ENCODE measurements at regions of chr1 and their contacts with region 1.

Region 1: GRCh38 chr1:163315773-163316374 is 5.9 kb upstream of the NUF2 start:
- DNase-seq: peak in 6 of 7 donors; percentile 22 to 68 (median 51)
- H3K4me3 ChIP-seq: no peak overlapping the region
- H3K27ac ChIP-seq: no peak overlapping the region
- H3K4me1 ChIP-seq: peaks cover 3% of the 10 kb centered on the region in 2 donors
- H3K27me3 ChIP-seq: no peaks in the 10 kb centered on the region
- CTCF ChIP-seq: peak; percentile 63 to 89 (median 76)
- POLR2A ChIP-seq: no peak

Region 2: DNA sequence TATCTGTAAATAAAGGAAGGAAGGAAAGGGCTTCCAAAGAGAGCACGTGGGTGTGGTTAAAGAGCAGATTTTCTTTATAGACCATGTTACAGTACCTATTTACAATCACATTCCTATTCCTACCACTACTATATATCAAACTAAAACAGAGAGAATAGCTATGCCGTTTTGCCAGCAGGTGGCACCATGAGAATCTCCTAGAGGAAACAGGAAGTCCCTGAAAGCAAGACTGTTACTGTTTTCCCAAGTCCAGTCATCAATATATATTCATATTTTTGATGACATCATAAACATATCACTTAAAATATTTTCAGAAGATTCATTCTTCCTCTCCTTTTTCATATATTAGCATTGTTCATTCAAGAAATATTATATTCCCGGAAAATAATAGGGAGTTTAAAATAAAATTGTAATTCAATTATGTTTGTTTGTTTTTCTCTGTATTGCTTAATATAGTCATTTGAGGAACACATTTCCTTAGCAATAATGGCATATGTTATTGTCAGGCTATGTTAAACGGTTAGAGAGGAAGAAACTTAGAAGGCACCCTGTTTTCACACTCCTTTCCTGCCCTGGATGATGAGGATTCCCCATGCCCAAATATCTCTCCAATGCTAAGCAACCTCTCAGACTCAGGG is 461.5 kb before region 1 on chr1:
- intact Hi-C with region 1: loop called in 1 of 2 experiments (anchors 10 kb)
- DNase-seq: peak; percentile 47 to 89 (median 63)
- H3K4me3 ChIP-seq: no peak overlapping the region
- H3K27ac ChIP-seq: no peak overlapping the region
- H3K4me1 ChIP-seq: no peaks in the 10 kb centered on the region
- H3K27me3 ChIP-seq: no peaks in the 10 kb centered on the region
- CTCF ChIP-seq: peak; percentile 53 to 75 (median 66)
- POLR2A ChIP-seq: no peak

Region 3: DNA sequence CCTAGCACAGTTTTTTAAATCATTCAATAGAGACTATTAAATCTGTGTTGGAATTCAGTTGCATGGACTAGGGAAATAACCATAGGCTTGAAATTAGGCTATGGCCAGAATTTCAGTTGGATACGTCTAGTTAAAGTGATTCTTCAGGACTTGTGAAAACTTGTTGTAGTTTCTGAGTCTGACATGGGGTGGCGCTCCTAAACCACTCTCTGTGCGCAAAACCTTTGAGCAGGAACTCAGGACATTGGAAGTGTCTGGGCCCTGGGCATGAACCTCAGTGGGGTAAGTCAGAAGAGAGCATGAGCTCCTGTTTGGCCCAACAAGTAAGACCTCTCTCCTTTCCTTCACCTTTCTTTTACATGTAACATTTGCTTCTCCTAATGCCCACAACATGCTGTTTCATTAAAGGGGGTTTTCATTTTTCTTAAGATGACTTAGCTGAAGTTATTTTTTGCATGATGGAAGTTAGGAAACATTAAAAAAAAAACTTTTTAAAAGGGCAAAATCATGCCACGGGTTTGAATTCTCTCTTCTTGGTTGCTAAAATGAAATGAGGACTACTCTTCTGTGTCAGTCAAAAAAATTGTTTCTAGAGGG is 437.8 kb before region 1 on chr1:
- intact Hi-C with region 1: loop called (anchors 5 kb)
- DNase-seq: peak; percentile 46 to 94 (median 75)
- H3K4me3 ChIP-seq: no peak overlapping the region
- H3K27ac ChIP-seq: no peak overlapping the region
- H3K4me1 ChIP-seq: no peaks in the 10 kb centered on the region
- H3K27me3 ChIP-seq: no peaks in the 10 kb centered on the region
- CTCF ChIP-seq: peak; percentile 35 to 91 (median 84)
- POLR2A ChIP-seq: no peak

Region 4: DNA sequence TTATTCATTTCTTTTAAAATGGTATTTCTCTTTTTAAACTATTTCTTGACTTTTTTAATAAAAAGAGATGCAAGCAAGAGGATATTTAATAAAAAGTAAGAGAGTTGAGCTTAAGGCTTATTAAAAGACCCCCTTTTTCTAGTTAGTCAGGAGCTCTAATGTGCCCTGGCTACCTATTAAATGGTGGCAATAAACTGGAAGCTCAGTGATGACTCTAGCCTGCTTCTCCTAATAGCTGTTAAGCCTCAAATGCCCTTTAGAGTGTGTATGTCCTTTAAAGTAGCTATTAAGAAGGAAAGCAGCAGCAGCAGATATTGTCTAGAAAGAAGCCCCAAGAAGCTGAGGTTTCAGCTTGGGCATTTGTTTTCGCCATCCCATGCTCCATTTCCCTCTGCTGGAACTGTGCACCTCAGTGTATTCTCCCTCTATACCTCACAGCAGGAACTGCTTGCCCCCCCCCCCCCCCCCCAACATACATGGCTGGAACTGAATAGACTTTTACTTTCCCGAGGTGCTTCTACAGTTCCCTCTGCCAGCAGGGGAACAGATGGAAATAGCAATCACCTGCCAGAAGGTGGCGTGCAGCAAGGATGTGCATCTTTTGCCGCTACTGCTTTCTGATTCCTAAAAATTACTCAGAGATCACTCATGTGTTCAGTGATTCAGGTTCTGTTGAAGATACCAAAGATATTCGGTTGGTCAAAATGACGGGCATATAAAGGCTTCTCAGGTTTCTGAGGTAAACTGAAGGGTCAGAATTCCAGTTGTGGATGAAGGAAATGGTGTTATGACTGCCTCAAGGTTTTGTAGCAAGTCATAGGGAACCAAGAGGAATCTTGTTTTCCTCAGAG is 244.2 kb before region 1 on chr1:
- intact Hi-C with region 1: loop called in 1 of 2 experiments (anchors 10 kb)
- DNase-seq: peak; percentile 67 to 93 (median 81)
- H3K4me3 ChIP-seq: no peak overlapping the region
- H3K27ac ChIP-seq: no peak overlapping the region
- H3K4me1 ChIP-seq: no peaks in the 10 kb centered on the region
- H3K27me3 ChIP-seq: no peaks in the 10 kb centered on the region
- CTCF ChIP-seq: peak; percentile 60 to 78 (median 73)
- POLR2A ChIP-seq: no peak

Region 5: DNA sequence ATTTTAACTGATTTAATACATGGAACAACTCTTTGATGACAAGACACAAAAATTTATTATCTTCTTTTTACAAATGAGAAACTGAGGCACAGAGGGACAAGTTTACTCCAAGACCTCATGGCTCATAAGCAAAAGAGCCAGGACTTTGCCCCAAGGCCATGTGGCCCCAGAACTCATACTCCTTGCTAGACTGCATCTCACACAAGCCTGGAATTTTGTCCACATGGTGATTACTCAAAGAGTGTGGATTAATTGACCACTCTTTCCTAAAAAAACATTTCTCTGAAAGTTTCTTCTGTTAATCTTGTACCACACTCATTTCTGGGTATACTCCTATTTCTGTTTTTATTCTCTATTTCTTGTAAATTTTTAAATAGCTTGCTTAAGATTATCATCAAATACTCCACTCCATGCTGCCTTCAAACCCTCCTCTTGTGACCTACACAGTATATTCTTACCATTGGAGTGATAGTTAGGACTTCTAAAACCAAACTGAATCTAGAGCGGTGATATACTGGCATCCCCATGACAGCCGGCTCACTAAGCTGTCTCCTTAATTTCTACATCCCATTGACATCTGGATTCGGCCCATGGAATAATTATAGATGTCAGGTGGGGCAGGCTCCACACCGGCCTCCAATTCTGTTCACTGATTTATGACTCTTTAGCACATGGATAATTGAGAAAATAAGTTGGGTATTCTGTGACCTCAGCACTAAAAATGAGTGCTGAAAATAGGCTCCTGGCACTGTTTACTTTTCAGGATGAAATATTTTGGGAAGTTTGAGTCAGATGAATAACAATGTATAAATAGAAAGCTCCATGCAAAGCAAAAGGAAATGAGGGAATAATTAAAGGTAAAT is 230.6 kb before region 1 on chr1:
- intact Hi-C with region 1: loop called in 1 of 2 experiments (anchors 10 kb)
- DNase-seq: no peak
- H3K4me3 ChIP-seq: no peak overlapping the region
- H3K27ac ChIP-seq: peak overlapping the region in 2 of 5 donors; percentile 2 to 32
- H3K4me1 ChIP-seq: peaks cover 0 to 17% of the 10 kb centered on the region in 2 donors
- H3K27me3 ChIP-seq: no peaks in the 10 kb centered on the region
- CTCF ChIP-seq: no peak
- POLR2A ChIP-seq: no peak

Region 6: GRCh38 chr1:163174524-163175437 is 141.1 kb before region 1 on chr1:
- intact Hi-C with region 1: loop called in 1 of 2 experiments (anchors 10 kb)
- DNase-seq: peak; percentile 65 to 91 (median 74)
- H3K4me3 ChIP-seq: no peak overlapping the region
- H3K27ac ChIP-seq: peak overlapping the region in 1 of 5 donors; percentile 29
- H3K4me1 ChIP-seq: peaks cover 0 to 23% of the 10 kb centered on the region in 2 donors
- H3K27me3 ChIP-seq: no peaks in the 10 kb centered on the region
- CTCF ChIP-seq: peak; percentile 73 to 93 (median 86)
- POLR2A ChIP-seq: no peak

Region 7: DNA sequence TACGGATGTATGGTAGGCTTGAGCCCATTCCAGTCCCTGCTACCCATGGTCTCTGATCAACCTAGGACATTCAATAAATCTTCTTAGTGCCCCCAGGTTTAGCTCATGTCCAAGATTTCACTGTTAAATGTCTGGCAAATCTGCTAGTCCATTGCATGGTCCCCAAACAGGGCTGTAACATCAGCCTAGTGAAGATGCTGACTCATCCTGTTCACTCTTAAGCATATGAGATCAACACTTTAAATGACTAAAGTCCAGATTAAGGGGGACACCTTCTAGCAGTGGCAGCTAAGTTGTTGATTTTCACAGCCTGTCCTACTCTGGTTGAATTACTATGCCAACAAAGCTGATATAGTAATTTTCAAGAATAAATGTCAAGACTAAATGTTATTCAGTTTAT is 40.7 kb before region 1 on chr1:
- intact Hi-C with region 1: no loop called
- DNase-seq: no peak
- H3K4me3 ChIP-seq: no peak overlapping the region
- H3K27ac ChIP-seq: no peak overlapping the region
- H3K4me1 ChIP-seq: no peaks in the 10 kb centered on the region
- H3K27me3 ChIP-seq: no peaks in the 10 kb centered on the region
- CTCF ChIP-seq: no peak
- POLR2A ChIP-seq: no peak

Region 8: GRCh38 chr1:163747261-163747660 is 431.4 kb after region 1 on chr1:
- intact Hi-C with region 1: no loop called
- DNase-seq: no peak
- H3K4me3 ChIP-seq: no peak overlapping the region
- H3K27ac ChIP-seq: no peak overlapping the region
- H3K4me1 ChIP-seq: no peaks in the 10 kb centered on the region
- H3K27me3 ChIP-seq: no peaks in the 10 kb centered on the region
- CTCF ChIP-seq: no peak
- POLR2A ChIP-seq: no peak